ENCODE measurements at regions of chr13 and their contacts with region 1.

Region 1: GRCh38 chr13:49840266-49840665 is 47.8 kb upstream of the KPNA3 start:
- DNase-seq: no peak
- CTCF ChIP-seq: no peak

Region 2: DNA sequence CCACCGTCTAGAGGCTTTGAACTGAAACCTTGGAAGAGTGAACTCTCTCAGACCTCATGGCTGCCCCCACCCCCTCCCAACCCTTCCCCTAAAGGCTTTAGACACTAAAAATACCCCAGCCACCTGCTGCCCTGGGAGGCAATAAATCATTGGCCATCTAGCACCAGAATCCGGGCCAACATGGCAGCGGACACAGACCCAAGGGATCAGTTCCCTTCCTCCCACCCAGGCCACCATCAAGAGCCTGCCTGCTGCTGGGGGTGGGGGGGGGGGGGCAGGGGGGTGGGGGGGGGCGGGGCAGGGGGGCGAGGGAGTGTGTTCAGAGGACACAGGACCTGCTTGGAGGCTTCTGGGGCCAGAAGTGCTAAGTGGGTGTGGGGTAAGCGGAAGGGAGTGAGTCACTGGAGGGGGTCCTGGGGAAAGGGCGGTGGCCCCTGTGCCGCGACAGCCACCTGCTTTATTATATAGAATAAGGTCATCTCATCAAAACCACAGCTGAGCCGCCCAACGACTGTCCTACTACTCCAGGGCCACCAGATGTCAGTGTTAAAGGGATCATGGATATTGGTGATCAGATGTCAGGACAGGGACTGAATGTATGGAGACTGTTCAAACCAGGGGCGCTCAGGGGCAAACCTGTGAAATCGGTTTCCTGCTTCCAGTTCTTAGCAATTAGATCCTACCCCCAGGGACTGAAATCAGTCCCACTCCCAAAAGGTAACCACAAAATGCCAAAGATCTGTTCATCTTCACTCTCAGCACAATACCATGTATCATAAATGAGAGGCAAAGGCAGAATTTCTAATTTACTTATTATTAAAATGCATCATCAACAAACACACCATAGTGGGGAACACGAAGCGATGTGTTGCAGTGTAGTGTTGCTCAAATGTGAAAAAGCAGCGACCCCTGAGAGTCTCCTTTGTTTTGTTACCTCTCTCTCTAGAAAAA is 187.6 kb before region 1 on chr13:
- in situ Hi-C with region 1: loop called (anchors 10 kb)
- DNase-seq: peak; percentile 66
- CTCF ChIP-seq: peak; percentile 37

Measured in GM13976 (cell line).